ENCODE measurements at regions of chr2 and their contacts with region 1.

Region 1: DNA sequence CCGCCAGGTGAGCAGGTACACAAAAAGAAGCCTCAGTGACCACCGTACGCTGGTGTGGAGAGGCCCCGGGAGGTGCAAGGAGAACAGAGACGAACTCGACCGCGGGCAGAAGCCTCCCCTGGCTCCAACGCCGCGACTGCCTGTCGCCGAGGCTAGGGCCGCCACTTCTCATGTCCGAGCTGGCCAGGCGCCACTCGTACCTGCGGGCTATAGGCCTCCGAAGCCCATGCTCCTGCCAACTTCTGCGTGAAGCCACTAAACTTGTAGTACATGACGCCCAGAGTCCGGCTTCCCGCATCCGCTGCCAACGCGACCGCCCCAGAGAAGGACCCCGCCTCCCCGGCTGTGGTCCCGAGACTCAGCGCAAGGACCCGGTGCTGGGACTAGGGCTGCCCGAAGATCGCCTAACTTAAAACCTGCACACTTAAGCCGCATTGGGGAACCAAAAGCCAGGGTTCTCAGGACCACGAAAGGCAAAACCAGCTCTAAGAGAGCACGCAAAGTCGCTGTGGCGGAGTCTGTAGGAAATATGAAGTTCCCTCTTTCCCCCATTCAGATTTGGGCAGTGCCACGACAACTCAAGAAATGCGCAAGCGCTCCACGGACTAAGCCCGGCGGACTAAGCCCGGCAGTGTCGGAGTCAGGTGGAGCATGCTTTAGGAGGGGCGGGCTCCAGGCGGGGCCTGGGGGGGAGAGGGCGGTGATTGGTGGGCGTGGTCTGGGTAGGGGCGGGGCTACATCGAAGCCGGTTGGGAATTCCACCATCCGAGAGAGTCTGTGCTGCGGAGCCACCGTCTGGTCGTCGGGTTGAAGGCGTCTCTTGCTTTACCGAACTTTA is at the start of gene COX7A2L:
- DNase-seq: peak; percentile 98
- H3K4me3 Mint-ChIP-seq: peak within 1 kb of the TSS; percentile 83
- H3K27ac Mint-ChIP-seq: peak within 1 kb of the TSS; percentile 98
- H3K4me1 Mint-ChIP-seq: peaks cover 42% of the 10 kb centered on the region
- H3K27me3 Mint-ChIP-seq: no peaks in the 10 kb centered on the region
- total RNA-seq, gene COX7A2L: 150 to 152 TPM

Region 2: GRCh38 chr2:41869542-41870264 is 491.4 kb before region 1 on chr2:
- CTCF ChIA-PET with region 1: no interaction called
- intact Hi-C with region 1: loop called (anchors 5 kb)
- DNase-seq: peak; percentile 81
- H3K4me3 Mint-ChIP-seq: no peak overlapping the region
- H3K27ac Mint-ChIP-seq: no peak overlapping the region
- H3K4me1 Mint-ChIP-seq: no peaks in the 10 kb centered on the region
- H3K27me3 Mint-ChIP-seq: no peaks in the 10 kb centered on the region

Region 3: DNA sequence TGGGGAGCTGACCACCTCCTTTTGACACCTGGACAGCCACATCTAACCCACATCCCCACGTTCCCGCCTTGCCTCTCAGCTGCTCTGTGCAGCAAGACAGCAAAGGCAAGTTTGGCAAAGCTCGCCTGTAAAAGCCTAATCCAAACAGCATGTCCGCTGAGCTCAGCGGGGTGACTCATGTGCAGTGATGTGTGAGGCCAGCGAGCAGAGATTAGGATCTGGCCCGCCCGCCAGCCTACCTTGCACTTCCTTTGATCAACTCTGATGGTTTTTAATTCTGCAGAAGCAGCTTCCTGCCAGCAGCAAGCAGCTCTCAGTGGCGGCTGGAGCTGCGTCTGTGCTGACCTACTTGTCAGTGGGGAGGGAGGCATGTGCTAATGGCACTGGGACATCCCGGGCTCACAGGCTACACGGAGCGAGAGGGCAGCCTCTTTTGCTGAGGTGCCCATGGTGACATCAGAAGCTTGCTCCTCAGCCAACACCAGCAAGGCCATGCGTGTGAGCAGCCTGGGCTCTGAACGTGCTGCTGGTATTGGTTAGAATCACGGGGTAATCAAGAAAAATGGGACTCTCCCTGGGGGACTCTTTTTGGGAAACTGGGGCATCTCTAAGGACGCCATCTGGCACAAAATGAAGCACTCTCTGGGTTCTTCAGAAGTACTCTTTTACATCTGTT is 228.0 kb before region 1 on chr2:
- CTCF ChIA-PET with region 1: no interaction called
- intact Hi-C with region 1: loop called (anchors 1 kb)
- DNase-seq: peak; percentile 91
- H3K4me3 Mint-ChIP-seq: peak overlapping the region; percentile 72
- H3K27ac Mint-ChIP-seq: peak overlapping the region; percentile 89
- H3K4me1 Mint-ChIP-seq: peaks cover 83% of the 10 kb centered on the region
- H3K27me3 Mint-ChIP-seq: no peaks in the 10 kb centered on the region

Region 4: DNA sequence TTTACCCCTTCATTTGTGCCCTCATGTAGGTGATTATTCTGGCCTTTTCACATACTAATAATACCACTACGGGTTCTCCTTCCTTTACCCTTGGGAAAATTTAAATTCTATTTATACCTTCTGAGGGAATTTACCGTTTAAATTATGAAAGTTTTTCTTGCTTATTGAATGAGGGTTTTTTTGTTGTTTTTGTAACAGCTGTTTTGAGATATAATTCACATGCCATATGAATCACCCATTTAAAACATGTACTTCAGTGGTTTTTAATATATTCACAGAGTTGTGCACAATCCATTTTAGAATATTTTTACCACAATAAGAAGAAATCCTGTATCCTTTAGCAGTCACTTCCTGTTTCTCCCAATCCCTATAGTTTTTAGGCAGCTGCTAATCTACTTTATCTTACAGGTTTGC is 137.2 kb before region 1 on chr2:
- CTCF ChIA-PET with region 1: no interaction called
- intact Hi-C with region 1: no loop called
- DNase-seq: no peak
- H3K4me3 Mint-ChIP-seq: no peak overlapping the region
- H3K27ac Mint-ChIP-seq: peak overlapping the region; percentile 20
- H3K4me1 Mint-ChIP-seq: peaks cover 61% of the 10 kb centered on the region
- H3K27me3 Mint-ChIP-seq: no peaks in the 10 kb centered on the region

Region 5: DNA sequence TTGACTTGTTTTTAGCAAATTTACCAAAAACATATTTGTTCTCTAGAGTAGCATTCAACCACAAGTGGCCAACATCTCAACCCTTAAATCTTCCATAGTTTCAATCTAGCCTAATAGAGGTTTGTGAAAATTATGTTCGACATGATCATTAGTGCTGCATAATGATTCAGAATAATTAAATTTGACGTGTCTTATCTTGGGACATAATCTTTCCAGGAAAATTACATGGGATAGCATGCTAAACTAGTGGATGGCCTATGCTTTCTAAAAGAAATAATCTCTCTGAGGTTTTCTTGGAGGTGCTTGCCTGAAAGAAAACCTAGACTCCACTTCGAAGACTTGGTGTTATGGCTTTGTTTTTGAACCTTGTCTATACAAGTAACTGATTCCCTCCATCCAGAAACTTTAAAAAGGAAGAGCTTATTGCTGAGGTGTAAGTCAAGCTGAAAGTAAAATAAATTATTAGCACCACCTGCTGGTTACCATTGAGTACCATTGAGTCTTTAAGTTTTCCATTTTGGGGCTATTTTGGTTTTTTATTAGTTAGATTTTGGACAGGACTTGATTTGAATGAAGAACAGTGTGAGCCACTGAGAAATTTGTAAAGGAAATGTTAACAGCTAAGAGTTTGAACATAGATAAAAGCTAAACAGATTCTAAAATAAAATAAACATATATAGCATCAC is 32.8 kb before region 1 on chr2:
- CTCF ChIA-PET with region 1: interaction called, 6 read pairs
- intact Hi-C with region 1: loop called (anchors 1 kb)
- DNase-seq: no peak
- H3K4me3 Mint-ChIP-seq: no peak overlapping the region
- H3K27ac Mint-ChIP-seq: peak overlapping the region; percentile 50
- H3K4me1 Mint-ChIP-seq: peaks cover 18% of the 10 kb centered on the region
- H3K27me3 Mint-ChIP-seq: no peaks in the 10 kb centered on the region

Region 6: GRCh38 chr2:42486145-42486906 is 125.2 kb after region 1 on chr2:
- CTCF ChIA-PET with region 1: no interaction called
- intact Hi-C with region 1: no loop called
- DNase-seq: no peak
- H3K4me3 Mint-ChIP-seq: no peak overlapping the region
- H3K27ac Mint-ChIP-seq: no peak overlapping the region
- H3K4me1 Mint-ChIP-seq: no peaks in the 10 kb centered on the region
- H3K27me3 Mint-ChIP-seq: no peaks in the 10 kb centered on the region

Region 7: GRCh38 chr2:42652086-42652485 is 291.0 kb after region 1 on chr2:
- CTCF ChIA-PET with region 1: no interaction called
- intact Hi-C with region 1: loop called (anchors 2 kb)
- DNase-seq: peak; percentile 56
- H3K4me3 Mint-ChIP-seq: peak overlapping the region; percentile 54
- H3K27ac Mint-ChIP-seq: peak overlapping the region; percentile 83
- H3K4me1 Mint-ChIP-seq: peaks cover 70% of the 10 kb centered on the region
- H3K27me3 Mint-ChIP-seq: no peaks in the 10 kb centered on the region

Region 8: GRCh38 chr2:43178602-43179542 is 817.8 kb after region 1 on chr2:
- CTCF ChIA-PET with region 1: no interaction called
- intact Hi-C with region 1: loop called (anchors 10 kb)
- DNase-seq: peak; percentile 65
- H3K4me3 Mint-ChIP-seq: peak overlapping the region; percentile 33
- H3K27ac Mint-ChIP-seq: peak overlapping the region; percentile 86
- H3K4me1 Mint-ChIP-seq: peaks cover 77% of the 10 kb centered on the region
- H3K27me3 Mint-ChIP-seq: no peaks in the 10 kb centered on the region